Stomach (tissue), 19 donors: ENCODE measurements at regions of chr13 and their contacts with region 1.

Region 1: DNA sequence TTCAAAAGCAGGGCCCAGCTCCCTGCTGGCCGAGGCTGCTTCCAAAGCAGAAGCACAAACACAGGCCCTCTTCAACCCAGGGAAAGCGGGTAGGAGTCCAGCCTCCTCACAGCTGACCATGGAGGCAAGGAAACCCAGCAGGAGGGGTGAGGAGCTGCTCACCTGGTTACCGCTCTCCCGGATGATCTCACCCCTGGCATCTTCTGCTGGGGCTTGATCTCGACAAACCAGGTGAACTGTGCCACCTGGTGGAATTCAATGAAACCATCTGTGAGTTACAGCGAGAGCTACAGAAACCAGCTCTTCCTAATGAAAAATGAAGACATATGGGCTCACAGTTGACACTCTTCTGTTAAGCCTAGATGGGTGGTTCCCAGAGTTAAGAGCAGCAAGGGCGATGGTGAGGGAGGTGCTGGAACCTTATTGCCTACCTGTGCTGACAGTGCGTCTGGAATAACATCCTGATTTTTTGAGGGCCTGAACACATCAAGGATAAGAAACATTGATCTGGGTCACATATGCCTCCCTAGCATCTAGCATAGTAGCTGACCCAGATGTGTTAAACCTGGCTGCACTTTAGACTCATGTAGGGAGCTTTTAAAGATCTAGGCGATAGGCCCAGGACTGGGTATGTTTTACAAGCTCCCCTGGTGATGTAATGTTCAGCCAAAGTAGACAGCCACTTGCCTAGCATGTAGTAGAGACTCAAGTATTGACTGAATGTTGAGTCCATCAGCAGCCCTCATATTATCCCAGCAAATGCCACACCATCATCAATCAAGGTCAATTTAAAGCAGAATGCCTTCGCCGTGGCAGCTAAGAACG is 6.1 kb downstream of the DHRS12 start:
- DNase-seq: peak; percentile 74 to 91
- H3K4me3 ChIP-seq: no peak overlapping the region
- H3K27ac ChIP-seq: no peak overlapping the region
- H3K4me1 ChIP-seq: peaks cover 20 to 37% (median 26%) of the 10 kb centered on the region in 4 donors
- H3K27me3 ChIP-seq: no peaks in the 10 kb centered on the region
- CTCF ChIP-seq: peak in 5 of 7 experiments; percentile 27 to 74 (median 39)
- EP300 ChIP-seq: no peak
- POLR2A ChIP-seq: no peak

Region 2: GRCh38 chr13:50850445-50850844 is 947.4 kb before region 1 on chr13:
- intact Hi-C with region 1: no loop called
- DNase-seq: no peak
- H3K4me3 ChIP-seq: no peak overlapping the region
- H3K27ac ChIP-seq: no peak overlapping the region
- H3K4me1 ChIP-seq: no peaks in the 10 kb centered on the region
- H3K27me3 ChIP-seq: no peaks in the 10 kb centered on the region
- CTCF ChIP-seq: no peak
- EP300 ChIP-seq: no peak
- POLR2A ChIP-seq: no peak

Region 3: GRCh38 chr13:51444922-51445321 is 353.0 kb before region 1 on chr13:
- intact Hi-C with region 1: loop called (anchors 10 kb)
- DNase-seq: peak in 1 of 2 donors; percentile 51
- H3K4me3 ChIP-seq: no peak overlapping the region
- H3K27ac ChIP-seq: no peak overlapping the region
- H3K4me1 ChIP-seq: peaks cover 0 to 20% (median 10%) of the 10 kb centered on the region in 4 donors
- H3K27me3 ChIP-seq: no peaks in the 10 kb centered on the region
- CTCF ChIP-seq: peak in 1 of 7 experiments; percentile 10
- EP300 ChIP-seq: no peak
- POLR2A ChIP-seq: no peak